Transverse colon (tissue), 4 donors: ENCODE measurements at regions of chr7 and their contacts with region 1.

Region 1: GRCh38 chr7:128387216-128388144 is 22.3 kb downstream of the IMPDH1 start:
- DNase-seq: peak; percentile 75
- H3K4me3 ChIP-seq: no peak overlapping the region
- H3K27ac ChIP-seq: no peak overlapping the region
- H3K4me1 ChIP-seq: peaks cover 0 to 6% (median 1%) of the 10 kb centered on the region in 4 donors
- H3K27me3 ChIP-seq: peaks cover 8% of the 10 kb centered on the region
- CTCF ChIP-seq: peak; percentile 73 to 84 (median 80)
- EP300 ChIP-seq: no peak
- POLR2A ChIP-seq: no peak

Region 2: GRCh38 chr7:128347647-128348097 is 39.8 kb before region 1 on chr7:
- in situ Hi-C with region 1: no loop called
- intact Hi-C with region 1: loop called (anchors 2 kb)
- DNase-seq: peak; percentile 46
- H3K4me3 ChIP-seq: no peak overlapping the region
- H3K27ac ChIP-seq: no peak overlapping the region
- H3K4me1 ChIP-seq: peaks cover under 1 to 19% (median 16%) of the 10 kb centered on the region in 4 donors
- H3K27me3 ChIP-seq: peaks cover 34% of the 10 kb centered on the region
- CTCF ChIP-seq: peak; percentile 38 to 54 (median 47)
- EP300 ChIP-seq: no peak
- POLR2A ChIP-seq: no peak